ENCODE measurements at regions of chr17 and their contacts with region 1.

Region 1: DNA sequence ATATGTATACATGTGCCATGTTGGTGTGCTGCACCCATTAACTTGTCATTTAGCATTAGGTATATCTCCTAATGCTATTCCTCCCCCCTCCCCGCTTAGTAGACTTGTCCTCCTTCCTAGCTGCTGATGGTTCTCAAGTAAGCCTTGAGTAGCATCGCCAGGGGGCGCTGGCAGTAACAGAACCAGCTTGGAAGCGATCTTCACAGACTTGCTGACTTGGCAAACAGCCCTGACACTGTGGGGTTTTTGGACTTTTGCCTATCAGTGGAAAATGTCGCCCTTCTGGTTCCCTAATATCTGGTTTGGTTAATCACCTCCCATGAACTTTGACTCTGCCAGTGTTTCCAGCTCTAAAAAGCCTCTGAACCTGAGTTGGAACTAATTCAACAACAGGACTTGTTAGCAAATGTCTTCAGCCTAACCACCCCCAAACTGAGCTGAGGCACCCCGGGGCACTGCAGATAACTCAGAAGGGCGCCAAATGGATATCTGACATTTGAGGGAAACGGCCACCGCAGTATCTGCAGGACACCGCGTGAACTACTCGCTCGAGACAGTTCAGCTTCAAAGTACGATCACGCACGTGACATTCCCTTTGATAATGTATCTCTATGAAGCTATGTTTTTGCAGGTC is 15.4 kb upstream of the SPATA32 start:
- DNase-seq: peak; percentile 94
- ATAC-seq: peak; percentile 98
- H3K4me3 Mint-ChIP-seq: no peak overlapping the region
- H3K27ac Mint-ChIP-seq: peak overlapping the region; percentile 54
- H3K4me1 Mint-ChIP-seq: peaks cover 15% of the 10 kb centered on the region
- H3K27me3 Mint-ChIP-seq: no peaks in the 10 kb centered on the region

Region 2: DNA sequence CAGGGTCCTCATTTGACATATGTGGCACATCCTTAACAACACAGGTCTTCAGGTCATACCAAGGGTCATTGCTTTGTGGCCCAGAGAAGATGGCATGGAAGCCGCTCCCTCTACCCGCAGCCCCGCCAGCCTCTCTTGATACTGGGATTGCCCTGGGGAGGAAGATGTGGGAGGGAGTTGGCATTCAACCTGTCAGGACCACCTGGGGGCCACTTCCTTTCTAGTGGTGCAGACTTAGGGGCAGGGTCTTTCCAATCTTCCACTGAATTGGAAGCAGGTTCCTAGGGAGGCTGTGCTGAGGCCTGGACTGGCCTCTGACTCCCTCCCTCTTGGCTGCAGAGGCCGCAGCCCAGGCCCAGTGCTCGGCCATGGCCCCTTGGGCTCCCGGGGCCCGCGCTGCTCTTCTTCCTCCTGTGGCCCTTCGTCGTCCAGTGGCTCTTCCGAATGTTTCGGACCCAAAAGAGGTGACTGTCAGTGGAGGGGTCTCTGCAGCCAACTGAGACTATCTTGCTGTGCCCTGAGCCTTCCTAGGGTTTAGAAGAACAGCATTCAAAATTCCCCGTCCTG is 134.1 kb before region 1 on chr17:
- CTCF ChIA-PET with region 1: no interaction called
- DNase-seq: no peak
- ATAC-seq: no peak
- H3K4me3 Mint-ChIP-seq: no peak overlapping the region
- H3K27ac Mint-ChIP-seq: no peak overlapping the region
- H3K4me1 Mint-ChIP-seq: peaks cover 31% of the 10 kb centered on the region
- H3K27me3 Mint-ChIP-seq: peaks cover 2% of the 10 kb centered on the region

Region 3: DNA sequence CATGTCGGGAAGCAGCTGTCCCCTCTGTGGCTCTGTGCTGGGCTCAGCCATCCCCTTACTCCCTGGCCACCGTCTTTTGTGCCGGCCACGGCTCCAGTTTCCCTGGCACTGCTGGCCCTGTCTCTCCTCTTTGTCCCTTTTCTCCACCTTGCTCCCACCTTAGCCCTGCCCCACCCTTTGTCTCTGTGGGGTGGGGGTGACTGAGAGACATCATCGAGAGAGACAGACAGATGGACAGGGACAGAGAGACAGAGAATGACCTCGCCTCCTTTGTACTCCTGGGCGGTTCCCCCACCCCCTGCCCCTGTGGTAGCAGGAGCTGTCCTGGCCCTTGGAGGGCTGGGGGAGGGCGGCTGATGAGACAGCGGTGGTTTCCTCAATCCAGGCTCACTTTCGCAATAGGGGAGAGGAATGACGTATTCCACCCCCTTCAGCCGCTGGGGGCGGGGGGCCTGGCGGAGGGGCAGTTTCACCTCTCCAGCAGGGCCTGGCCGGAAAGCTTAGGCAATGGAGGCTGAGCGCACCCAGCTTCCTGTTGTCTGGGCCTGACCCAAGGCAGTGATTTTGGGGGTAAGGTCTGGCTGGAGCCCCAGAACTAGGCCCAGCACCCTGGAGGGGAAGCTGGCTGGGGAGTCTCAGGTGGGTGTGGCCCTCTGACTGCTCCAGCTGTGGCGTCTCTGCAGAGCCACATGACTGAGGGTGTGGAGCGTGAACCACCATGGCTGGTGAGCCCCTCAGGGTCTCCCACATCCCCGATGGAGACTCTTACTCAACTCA is 48.4 kb before region 1 on chr17:
- CTCF ChIA-PET with region 1: interaction called, 12 read pairs
- DNase-seq: peak; percentile 93
- ATAC-seq: peak; percentile 47
- H3K4me3 Mint-ChIP-seq: peak overlapping the region; percentile 93
- H3K27ac Mint-ChIP-seq: peak overlapping the region; percentile 100
- H3K4me1 Mint-ChIP-seq: peaks cover 74% of the 10 kb centered on the region
- H3K27me3 Mint-ChIP-seq: no peaks in the 10 kb centered on the region

Region 4: GRCh38 chr17:45247429-45248131 is 29.8 kb before region 1 on chr17:
- CTCF ChIA-PET with region 1: interaction called, 20 read pairs
- DNase-seq: peak; percentile 100
- ATAC-seq: peak; percentile 91
- H3K4me3 Mint-ChIP-seq: peak overlapping the region; percentile 82
- H3K27ac Mint-ChIP-seq: peak overlapping the region; percentile 96
- H3K4me1 Mint-ChIP-seq: peaks cover 60% of the 10 kb centered on the region
- H3K27me3 Mint-ChIP-seq: no peaks in the 10 kb centered on the region

Region 5: DNA sequence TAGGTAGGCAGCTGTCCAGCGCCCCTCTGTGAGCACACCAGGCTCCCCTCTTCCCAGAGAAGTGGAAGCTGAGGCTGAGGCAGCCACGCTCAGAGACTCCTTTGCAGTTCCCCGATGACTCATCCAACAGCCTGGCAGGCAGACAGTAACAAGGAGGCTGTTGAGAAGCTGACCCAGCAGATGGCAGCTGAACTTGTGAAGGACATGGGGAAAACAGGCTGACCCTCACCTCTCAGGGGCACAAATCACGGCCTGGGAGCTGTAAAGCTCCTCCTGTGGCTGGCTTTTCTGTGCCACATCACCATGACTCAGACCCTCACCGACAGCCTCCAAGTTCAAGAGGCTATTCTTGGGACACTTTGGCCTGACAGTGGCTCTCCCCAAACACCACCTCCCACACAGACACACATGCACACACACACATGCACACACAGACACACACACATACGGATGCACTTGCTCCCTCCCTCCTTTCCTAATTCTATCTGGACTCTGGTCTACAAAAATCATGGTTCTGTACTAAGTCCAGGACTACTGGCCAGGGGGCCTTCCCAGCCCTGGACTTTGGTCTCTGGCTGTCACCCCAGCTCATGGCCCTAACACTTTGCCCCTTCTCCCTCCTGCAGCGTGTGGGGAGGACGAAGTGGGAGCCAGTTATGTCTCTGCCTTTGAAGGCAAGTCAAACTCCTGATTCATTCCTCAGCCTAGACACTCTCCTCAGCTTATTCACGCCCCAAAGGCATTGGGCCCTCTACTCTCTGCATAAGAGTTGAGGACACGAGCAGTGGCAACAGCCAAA is 16.3 kb after region 1 on chr17:
- CTCF ChIA-PET with region 1: interaction called, 36 read pairs
- DNase-seq: no peak
- ATAC-seq: peak; percentile 55
- H3K4me3 Mint-ChIP-seq: no peak overlapping the region
- H3K27ac Mint-ChIP-seq: peak overlapping the region; percentile 61
- H3K4me1 Mint-ChIP-seq: peaks cover 82% of the 10 kb centered on the region
- H3K27me3 Mint-ChIP-seq: no peaks in the 10 kb centered on the region

Region 6: DNA sequence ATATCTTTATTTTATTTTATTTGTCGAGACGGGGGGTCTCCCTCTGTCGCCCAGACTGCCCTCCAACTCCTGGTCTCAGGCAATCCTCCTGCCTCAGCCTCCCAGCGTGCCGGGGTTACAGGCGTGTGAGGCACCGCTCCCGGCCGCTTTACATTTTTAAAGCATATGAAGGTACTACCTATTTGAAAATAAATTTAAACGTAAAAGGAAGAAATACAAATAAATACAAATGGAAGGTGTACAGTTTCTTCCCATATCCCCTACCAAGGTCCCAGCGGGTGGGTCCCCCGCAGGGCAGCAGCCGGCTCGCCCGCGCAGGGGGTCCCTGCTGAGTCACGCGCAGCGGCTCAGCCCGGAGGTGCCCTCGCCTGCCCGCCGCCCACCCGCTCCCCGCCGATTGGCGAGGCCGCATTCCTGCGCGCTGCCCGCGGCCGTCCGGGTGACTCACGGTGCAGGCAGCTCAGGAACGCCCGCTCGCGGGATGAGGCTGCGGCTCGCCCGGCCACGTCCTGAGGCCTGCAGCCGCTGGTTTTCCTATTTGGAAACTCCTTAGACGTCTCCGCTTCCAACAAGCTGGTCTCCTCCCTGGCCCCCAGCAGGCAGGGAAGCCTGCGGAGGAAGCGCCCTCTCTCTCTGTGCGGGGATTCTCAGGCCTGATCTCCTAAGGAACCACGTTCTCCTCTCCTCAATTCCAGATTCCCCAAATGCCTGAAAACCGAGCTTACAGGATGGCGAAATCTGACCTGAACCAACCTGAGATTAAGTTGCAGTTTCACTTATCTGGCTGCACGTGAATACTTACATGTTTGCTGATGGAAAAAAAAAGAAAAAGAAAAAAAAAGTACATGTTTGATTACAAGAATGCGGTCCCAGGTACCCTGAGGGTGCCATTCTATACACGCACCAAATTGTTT is 94.3 kb after region 1 on chr17:
- CTCF ChIA-PET with region 1: interaction called, 10 read pairs
- DNase-seq: no peak
- ATAC-seq: peak; percentile 73
- H3K4me3 Mint-ChIP-seq: peak overlapping the region; percentile 47
- H3K27ac Mint-ChIP-seq: no peak overlapping the region
- H3K4me1 Mint-ChIP-seq: peaks cover 16% of the 10 kb centered on the region
- H3K27me3 Mint-ChIP-seq: peaks cover 23% of the 10 kb centered on the region